Activated CD4-positive, alpha-beta T cell treated with anti-CD3 and anti-CD28 coated beads, Interleukin-2, amount 10 ng/mL, durations not matched to agents 24 days and 14 days (primary cell): ENCODE measurements at regions of chr10 and their contacts with region 1.

Region 1: DNA sequence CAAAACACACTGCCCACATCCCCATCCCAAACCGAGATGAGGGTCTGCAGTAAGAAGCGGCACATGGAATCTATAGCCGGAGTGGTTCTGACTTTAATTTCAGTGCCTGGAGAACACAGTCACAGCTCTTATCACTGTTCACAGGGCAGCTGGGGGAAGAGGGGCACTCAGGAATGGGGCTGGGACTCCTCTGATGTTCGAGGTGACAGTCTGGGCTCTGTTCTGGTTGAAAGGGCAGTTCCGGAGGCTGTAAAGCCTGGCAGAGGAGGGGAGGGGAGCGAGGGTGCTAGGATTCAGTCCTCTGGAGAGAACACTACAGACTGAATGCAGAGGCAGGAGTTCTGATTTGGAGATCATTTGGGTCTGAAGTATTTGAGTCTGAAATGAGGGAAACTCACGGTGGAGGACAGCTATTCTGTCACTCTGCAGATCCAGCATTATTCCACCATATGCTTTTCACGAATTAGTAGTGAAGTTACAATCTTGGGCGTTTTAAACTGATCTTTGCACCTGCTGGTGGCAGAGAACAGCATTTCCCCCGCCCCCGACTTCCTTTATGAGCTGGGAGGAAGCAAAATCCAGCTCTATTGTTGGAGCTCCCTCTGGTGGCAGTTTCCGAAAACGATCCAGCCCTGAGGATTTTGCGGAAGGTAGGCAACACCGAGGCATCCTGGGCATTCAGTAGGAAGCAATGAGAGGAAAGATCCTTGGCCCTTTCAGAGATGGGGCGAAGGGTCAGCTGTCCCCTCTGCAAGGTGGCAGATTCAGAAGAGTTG is 22.7 kb upstream of the KCNK18 start:
- DNase-seq: peak; percentile 94
- H3K4me3 Mint-ChIP-seq: peak overlapping the region; percentile 84
- H3K27ac Mint-ChIP-seq: no peak overlapping the region
- H3K4me1 Mint-ChIP-seq: peaks cover 18% of the 10 kb centered on the region
- H3K27me3 Mint-ChIP-seq: peaks cover 34% of the 10 kb centered on the region

Region 2: GRCh38 chr10:116687633-116688032 is 487.0 kb before region 1 on chr10:
- intact Hi-C with region 1: loop called (anchors 1 kb)
- DNase-seq: no peak
- H3K4me3 Mint-ChIP-seq: no peak overlapping the region
- H3K27ac Mint-ChIP-seq: no peak overlapping the region
- H3K4me1 Mint-ChIP-seq: no peaks in the 10 kb centered on the region
- H3K27me3 Mint-ChIP-seq: peaks cover 6% of the 10 kb centered on the region

Region 3: DNA sequence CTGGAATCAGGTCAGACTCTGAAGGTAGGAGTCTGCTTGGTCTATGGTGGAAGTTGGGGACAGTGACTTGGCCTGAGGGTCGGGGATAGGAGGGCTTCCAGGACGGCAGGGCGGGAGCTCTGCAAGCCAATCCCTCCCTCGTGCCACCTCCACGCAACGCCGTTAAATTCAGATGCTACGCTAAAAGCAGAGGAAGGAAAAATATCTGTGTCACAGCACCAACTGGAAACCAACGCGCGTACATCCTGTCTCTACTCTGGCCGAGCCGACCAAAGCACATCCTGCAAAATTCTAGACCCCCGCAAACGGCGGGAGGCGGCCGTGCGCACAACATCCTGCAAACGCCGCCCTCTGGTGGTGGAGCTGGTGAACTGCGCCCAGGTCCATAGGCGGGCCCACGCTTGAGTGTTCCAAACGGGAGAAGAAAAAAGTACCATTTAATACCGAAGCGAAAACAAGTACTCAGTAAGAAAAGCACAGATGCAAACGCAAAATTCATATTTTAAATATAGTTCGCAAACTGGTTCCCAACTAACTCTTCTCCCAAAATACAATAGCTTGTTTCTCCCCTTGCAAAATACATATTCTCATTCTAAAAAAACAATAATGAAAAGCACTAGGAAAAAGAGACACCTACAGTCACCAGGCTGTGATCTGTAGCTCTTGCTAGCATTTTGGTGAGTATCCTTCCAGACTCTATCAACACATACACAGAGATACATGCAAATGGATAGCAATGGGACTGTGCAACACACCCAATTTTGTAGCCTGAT is 386.5 kb before region 1 on chr10:
- intact Hi-C with region 1: loop called (anchors 2 kb)
- DNase-seq: peak; percentile 93
- H3K4me3 Mint-ChIP-seq: peak overlapping the region; percentile 59
- H3K27ac Mint-ChIP-seq: peak overlapping the region; percentile 48
- H3K4me1 Mint-ChIP-seq: peaks cover 12% of the 10 kb centered on the region
- H3K27me3 Mint-ChIP-seq: peaks cover 5% of the 10 kb centered on the region

Region 4: DNA sequence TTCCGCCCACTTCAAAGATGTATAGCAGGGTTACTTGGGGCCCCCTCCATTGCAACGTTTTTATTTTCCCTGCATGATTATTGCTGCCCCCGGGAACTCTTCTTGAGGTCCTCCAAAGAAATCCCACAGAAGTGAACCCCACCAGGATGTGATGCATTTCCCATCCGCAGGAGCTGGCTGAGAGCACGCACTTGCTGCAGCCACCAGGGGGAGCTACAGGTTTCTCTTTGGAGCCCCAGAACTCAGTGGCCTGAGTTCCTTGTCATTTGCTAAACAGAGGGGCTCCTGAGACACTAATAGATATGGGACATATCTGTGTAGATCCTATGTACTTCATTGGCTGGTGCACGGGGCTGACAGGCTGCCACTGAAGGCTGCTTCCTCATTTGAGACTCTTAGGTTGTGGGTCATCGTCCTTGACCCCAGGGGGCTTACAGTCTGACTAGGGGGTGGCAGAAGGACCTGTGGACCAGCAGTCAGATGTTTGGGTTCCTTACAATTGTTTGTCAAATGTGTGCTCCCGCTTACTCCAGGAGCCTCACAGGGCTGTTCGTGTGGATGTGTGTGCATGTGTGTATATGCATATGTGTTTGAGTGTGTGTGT is 377.6 kb before region 1 on chr10:
- intact Hi-C with region 1: loop called (anchors 1 kb)
- DNase-seq: peak; percentile 88
- H3K4me3 Mint-ChIP-seq: no peak overlapping the region
- H3K27ac Mint-ChIP-seq: no peak overlapping the region
- H3K4me1 Mint-ChIP-seq: no peaks in the 10 kb centered on the region
- H3K27me3 Mint-ChIP-seq: peaks cover 5% of the 10 kb centered on the region

Region 5: GRCh38 chr10:117005027-117005526 is 169.6 kb before region 1 on chr10 and contains the start of gene SHTN1:
- intact Hi-C with region 1: loop called (anchors 10 kb)
- DNase-seq: peak; percentile 69
- H3K4me3 Mint-ChIP-seq: peak within 1 kb of the TSS; percentile 75
- H3K27ac Mint-ChIP-seq: no peak within 1 kb of the TSS
- H3K4me1 Mint-ChIP-seq: no peaks in the 10 kb centered on the region
- H3K27me3 Mint-ChIP-seq: peaks cover 25% of the 10 kb centered on the region
- total RNA-seq, gene SHTN1: 0.05 and 0.07 TPM in 2 replicates

Region 6: GRCh38 chr10:117284716-117285494 is 110.3 kb after region 1 on chr10:
- intact Hi-C with region 1: no loop called
- DNase-seq: no peak
- H3K4me3 Mint-ChIP-seq: no peak overlapping the region
- H3K27ac Mint-ChIP-seq: no peak overlapping the region
- H3K4me1 Mint-ChIP-seq: peaks cover 3% of the 10 kb centered on the region
- H3K27me3 Mint-ChIP-seq: no peaks in the 10 kb centered on the region